ENCODE measurements at regions of chr6 and their contacts with region 1.

Region 1: DNA sequence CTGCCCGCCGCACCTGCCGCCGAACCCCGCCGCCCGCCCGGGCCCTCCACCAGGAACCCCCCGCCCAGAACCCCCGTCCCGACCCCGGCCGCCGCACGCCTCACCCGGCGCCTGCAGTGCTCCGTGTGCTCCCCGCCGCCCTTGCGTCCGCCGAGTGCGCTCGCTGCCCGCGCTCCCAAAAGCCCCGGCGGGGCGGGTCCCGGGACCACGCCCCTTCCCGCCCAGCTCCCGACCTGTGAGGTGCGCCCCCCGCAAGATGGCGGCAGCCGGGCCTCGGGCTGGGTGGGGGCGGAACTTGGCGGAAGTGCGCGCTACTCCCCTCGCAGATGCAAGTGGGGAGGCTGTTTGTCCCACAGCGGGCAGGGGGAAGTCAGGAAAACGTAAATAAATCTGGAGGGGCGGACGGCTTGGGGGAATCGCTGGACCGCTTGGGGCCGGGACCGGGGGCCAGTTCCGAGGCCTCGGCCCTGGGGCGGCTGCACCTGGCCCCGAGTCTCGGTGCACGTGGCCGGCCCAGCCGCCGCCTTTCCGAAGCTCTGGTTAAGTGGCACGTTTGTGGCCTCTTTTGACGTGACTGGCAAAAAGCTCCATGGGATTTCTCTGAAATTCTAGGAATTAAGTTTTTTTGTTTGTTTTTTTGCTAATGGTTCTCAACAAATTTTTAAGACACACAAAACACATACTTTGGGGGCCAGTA is at the start of gene EZR:
- DNase-seq: peak; percentile 91
- ATAC-seq: peak; percentile 52
- H3K4me3 Mint-ChIP-seq: peak within 1 kb of the TSS; percentile 93
- H3K27ac Mint-ChIP-seq: peak within 1 kb of the TSS; percentile 87
- H3K4me1 Mint-ChIP-seq: peaks cover 38% of the 10 kb centered on the region
- H3K27me3 Mint-ChIP-seq: no peaks in the 10 kb centered on the region
- total RNA-seq, gene EZR: 197 to 203 TPM

Region 2: GRCh38 chr6:158519761-158520160 is 299.6 kb before region 1 on chr6:
- CTCF ChIA-PET with region 1: no interaction called
- POLR2A ChIA-PET with region 1: no interaction called
- intact Hi-C with region 1: no loop called
- DNase-seq: no peak
- ATAC-seq: no peak
- H3K4me3 Mint-ChIP-seq: no peak overlapping the region
- H3K27ac Mint-ChIP-seq: no peak overlapping the region
- H3K4me1 Mint-ChIP-seq: peaks cover 28% of the 10 kb centered on the region
- H3K27me3 Mint-ChIP-seq: peaks cover 24% of the 10 kb centered on the region

Region 3: DNA sequence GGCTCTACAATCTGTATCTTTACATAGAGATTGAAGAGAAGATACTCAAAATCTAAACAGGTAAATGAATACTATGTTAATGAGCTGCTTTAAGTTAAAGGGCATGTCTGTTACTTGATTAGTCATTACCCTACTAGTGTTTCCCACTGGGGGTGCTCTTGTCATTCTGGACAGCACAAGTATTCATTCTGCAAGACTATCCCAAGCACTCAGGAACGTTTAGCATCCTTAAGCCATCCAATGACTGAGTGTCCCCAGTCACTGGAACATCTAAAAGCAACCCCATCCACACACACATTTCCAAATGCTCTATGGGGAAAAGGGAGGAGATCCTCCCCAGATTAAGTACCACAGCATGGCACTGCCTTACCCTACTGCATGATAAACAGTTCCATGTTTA is 25.9 kb before region 1 on chr6:
- CTCF ChIA-PET with region 1: interaction called, 4 read pairs
- POLR2A ChIA-PET with region 1: interaction called, 7 read pairs
- intact Hi-C with region 1: loop called in 1 of 2 experiments (anchors 1 kb)
- DNase-seq: no peak
- ATAC-seq: peak; percentile 74
- H3K4me3 Mint-ChIP-seq: no peak overlapping the region
- H3K27ac Mint-ChIP-seq: peak overlapping the region; percentile 53
- H3K4me1 Mint-ChIP-seq: peaks cover 87% of the 10 kb centered on the region
- H3K27me3 Mint-ChIP-seq: no peaks in the 10 kb centered on the region

Region 4: DNA sequence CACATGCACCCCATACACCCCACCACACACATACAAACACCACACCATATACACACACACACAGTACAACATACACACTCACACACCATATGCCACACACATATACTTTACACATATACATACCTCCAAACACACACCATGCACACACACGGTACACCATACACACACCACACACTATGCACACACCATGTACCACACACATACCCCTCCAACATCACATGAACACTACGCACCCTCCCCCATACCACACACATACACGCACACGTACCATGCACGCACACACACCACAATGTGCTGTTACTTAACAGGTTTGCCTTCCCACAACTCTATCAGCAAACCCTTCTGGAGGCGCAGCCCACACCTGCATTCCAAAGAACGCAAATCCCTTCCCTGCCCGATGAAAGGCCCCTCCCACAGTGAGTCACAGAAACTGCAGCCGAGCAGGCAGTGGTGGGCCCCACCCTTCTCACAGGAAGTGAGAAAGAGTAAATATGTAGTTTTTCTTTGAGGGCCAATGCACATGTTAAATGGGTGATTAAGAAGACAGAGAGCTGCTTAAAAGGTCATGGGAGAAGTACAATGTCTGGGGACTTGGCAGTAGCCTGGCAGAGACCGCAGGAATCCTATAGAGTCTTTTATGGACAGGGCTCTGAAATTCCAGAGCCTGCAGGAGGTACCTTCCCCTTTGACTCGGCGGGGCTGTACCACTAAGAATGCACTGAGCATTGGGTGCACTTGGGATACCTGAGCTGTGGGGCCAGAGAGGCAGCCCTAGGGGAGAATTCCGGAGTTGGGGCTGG is 33.9 kb after region 1 on chr6:
- CTCF ChIA-PET with region 1: no interaction called
- POLR2A ChIA-PET with region 1: interaction called, 3 read pairs
- intact Hi-C with region 1: loop called (anchors 1 kb)
- DNase-seq: peak; percentile 94
- ATAC-seq: peak; percentile 83
- H3K4me3 Mint-ChIP-seq: no peak overlapping the region
- H3K27ac Mint-ChIP-seq: no peak overlapping the region
- H3K4me1 Mint-ChIP-seq: peaks cover 29% of the 10 kb centered on the region
- H3K27me3 Mint-ChIP-seq: no peaks in the 10 kb centered on the region

Region 5: DNA sequence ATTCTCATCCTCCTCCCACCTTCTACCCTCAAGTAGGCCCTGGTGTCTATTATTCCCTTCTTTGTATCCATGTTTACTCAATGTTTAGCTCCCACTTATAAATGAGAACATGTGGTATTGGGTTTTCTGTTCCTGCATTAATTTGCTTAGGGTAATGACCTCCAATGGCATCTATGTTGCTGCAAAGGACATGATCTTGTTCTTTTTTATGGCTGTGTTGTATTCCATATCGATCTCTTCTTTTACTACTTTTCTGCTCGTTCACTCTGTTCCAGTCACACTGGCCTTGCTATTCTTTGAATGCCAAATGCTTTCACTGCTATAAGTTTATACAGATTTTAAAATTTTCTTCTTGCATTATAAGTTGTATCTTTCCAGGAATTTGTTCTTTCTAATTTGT is 123.0 kb after region 1 on chr6:
- CTCF ChIA-PET with region 1: no interaction called
- POLR2A ChIA-PET with region 1: no interaction called
- intact Hi-C with region 1: no loop called
- DNase-seq: no peak
- ATAC-seq: no peak
- H3K4me3 Mint-ChIP-seq: no peak overlapping the region
- H3K27ac Mint-ChIP-seq: no peak overlapping the region
- H3K4me1 Mint-ChIP-seq: peaks cover 8% of the 10 kb centered on the region
- H3K27me3 Mint-ChIP-seq: peaks cover 7% of the 10 kb centered on the region

Region 6: GRCh38 chr6:158999666-159000403 is 180.5 kb after region 1 on chr6 and contains the start of gene RSPH3:
- CTCF ChIA-PET with region 1: no interaction called
- POLR2A ChIA-PET with region 1: no interaction called
- intact Hi-C with region 1: loop called (anchors 1 to 5 kb)
- DNase-seq: peak; percentile 97
- ATAC-seq: peak; percentile 86
- H3K4me3 Mint-ChIP-seq: peak within 1 kb of the TSS; percentile 82
- H3K27ac Mint-ChIP-seq: peak within 1 kb of the TSS; percentile 66
- H3K4me1 Mint-ChIP-seq: peaks cover 46% of the 10 kb centered on the region
- H3K27me3 Mint-ChIP-seq: no peaks in the 10 kb centered on the region
- total RNA-seq, gene RSPH3: 6.5 to 9.3 TPM